ENCODE measurements at regions of chr2 and their contacts with region 1.

Region 1: DNA sequence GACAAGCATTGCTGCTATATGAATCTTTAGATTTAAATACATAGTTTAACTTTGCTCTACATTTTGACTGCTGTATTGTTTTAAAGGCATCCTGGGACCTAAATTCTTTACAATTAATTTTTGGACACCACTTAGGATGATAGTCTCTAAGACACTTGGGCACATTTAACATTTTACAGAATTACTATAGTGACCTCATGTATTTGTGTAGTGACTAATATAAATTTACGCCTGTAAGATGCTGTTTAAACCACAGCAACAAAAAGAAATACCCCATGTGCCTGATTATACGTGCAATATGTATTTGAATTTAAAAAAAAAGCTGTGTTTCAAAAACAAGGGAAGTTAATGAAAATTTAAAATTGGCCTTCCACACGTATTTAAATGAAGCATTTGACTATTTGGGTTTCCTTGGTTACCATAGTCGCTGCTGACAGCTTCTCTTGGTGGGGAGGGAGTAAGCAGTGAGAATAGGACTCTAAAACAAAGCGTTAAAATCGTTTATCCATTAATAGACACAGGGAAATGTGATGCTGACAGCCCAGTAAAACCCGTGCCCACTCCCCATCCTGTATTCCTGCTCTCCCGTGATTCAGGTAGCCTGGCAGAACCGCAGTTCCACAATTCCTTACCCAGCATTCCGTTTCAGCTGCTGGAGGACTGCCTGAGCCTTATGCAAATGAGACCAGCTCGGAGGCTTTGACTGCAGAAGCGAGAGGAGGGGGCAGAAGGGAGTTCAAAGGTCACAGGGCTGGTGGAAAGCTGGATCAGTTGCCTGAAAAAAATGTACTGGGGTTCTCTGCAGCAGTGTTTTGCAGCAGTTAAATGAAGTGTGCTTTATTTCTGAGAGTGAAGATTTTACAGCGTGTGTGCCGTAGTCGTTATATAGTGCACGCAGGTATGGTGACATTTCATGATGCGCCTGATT is 104.3 kb downstream of the CSRNP3 start:
- DNase-seq: peak; percentile 17 to 40
- ATAC-seq: peak; percentile 82 to 94 (median 87)
- H3K4me3 ChIP-seq: peak overlapping the region; percentile 19 to 58 (median 50)
- H3K27ac ChIP-seq: peak overlapping the region in 7 of 10 donors; percentile 9 to 46 (median 22)
- H3K4me1 ChIP-seq: peaks cover 0 to 32% (median 9%) of the 10 kb centered on the region in 9 donors
- H3K27me3 ChIP-seq: no peaks in the 10 kb centered on the region
- CTCF ChIP-seq: no peak

Region 2: DNA sequence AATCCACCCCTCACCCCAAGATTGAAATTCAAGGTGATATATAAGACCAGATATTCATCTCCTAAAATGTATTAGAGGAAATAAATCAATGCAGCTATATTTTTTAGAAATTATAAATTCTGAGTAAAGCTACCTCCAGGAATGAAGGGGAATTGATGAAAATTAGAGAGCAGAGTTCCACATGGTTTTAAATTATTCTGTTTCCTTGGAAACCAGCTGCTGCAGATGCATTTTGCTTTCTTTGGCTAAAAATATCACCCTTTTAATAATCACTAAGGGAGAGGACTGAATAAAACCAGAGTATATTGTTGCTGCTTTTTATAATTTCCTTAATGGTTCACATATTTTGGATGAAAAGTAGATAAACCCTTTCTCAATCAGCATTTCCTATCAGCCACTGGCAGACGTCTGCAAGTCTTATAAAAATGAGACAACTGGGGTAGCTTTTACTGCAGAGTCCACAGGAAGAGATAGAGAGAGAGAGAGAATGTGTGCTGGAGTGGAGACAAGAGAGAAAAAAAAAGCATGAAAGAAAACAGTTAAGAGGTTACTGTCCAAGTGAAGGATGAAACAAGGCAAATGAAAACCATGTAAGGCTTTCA is 102.3 kb before region 1 on chr2:
- intact Hi-C with region 1: loop called in 2 of 10 experiments (anchors 10 kb)
- DNase-seq: no peak
- ATAC-seq: peak in 4 of 8 donors; percentile 39 to 54 (median 46)
- H3K4me3 ChIP-seq: peak overlapping the region in 5 of 10 donors; percentile 5 to 18 (median 10)
- H3K27ac ChIP-seq: no peak overlapping the region
- H3K4me1 ChIP-seq: peaks cover 0 to 38% (median 16%) of the 10 kb centered on the region in 9 donors
- H3K27me3 ChIP-seq: no peaks in the 10 kb centered on the region
- CTCF ChIP-seq: no peak

Region 3: GRCh38 chr2:165621086-165621560 is 47.3 kb after region 1 on chr2:
- intact Hi-C with region 1: no loop called
- DNase-seq: no peak
- ATAC-seq: peak in 2 of 8 donors; percentile 38 to 56
- H3K4me3 ChIP-seq: no peak overlapping the region
- H3K27ac ChIP-seq: peak overlapping the region in 1 of 10 donors; percentile 19
- H3K4me1 ChIP-seq: peaks cover 0 to 15% (median 0%) of the 10 kb centered on the region in 9 donors
- H3K27me3 ChIP-seq: no peaks in the 10 kb centered on the region
- CTCF ChIP-seq: no peak

Region 4: GRCh38 chr2:165681841-165682240 is 108.0 kb after region 1 on chr2:
- intact Hi-C with region 1: loop called in 2 of 10 experiments (anchors 10 kb)
- DNase-seq: peak in 1 of 2 donors; percentile 39
- ATAC-seq: peak; percentile 90 to 98 (median 96)
- H3K4me3 ChIP-seq: no peak overlapping the region
- H3K27ac ChIP-seq: peak overlapping the region in 9 of 10 donors; percentile 24 to 80 (median 58)
- H3K4me1 ChIP-seq: peaks cover 0 to 27% (median 8%) of the 10 kb centered on the region in 9 donors
- H3K27me3 ChIP-seq: no peaks in the 10 kb centered on the region
- CTCF ChIP-seq: no peak

Measured in heart right ventricle (tissue), 16 donors.